IMR-90 (cell line): ENCODE measurements at regions of chr1 and their contacts with region 1.

Region 1: DNA sequence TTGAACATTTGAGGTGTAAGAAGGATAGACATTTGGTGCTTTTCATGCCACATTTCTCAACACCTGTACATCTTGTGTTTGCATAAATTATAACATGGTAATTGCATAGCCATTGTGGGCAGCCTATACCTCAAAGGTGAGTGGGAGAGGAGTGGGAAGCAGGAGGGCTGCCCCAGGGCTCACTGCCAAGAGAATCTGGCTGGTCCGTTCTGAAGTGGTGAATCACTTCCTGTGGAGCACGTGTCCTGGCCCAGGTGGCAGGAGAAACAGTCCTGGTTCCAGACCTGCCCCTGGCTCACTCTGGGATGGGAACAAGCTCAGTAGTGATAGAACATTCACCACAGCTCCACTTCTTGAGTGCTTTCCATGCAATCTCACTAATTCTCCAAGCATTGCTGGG is 11.6 kb upstream of the OLFML2B start:
- DNase-seq: no peak
- ATAC-seq: no peak
- H3K4me3 ChIP-seq: no peak overlapping the region
- H3K27ac ChIP-seq: no peak overlapping the region
- H3K4me1 ChIP-seq: no peaks in the 10 kb centered on the region
- H3K27me3 ChIP-seq: peaks cover 23% of the 10 kb centered on the region
- CTCF ChIP-seq: no peak
- POLR2A ChIP-seq: no peak
- RAD21 ChIP-seq: no peak

Region 2: DNA sequence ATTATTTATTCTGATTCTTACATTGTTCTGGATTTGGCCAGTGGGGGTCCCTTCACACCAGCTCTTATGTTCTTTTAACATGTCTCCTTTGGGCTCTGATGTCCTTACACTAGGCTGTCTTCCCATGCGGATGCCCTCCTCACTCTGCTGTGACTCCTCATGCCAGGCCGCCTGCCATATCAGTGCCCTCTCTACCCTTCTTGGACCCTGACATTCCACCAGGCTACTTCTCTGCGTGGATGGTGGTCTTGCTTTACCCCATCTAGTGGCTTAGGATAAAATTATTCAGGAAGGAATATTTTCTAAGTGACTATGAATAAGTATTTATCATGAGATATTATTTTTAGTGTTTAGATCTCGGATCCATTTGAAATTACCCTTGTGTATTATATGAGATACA is 247.9 kb before region 1 on chr1:
- CTCF ChIA-PET with region 1: interaction called, 76 read pairs
- POLR2A ChIA-PET with region 1: interaction called, 7 read pairs
- dilution Hi-C with region 1: no loop called
- in situ Hi-C with region 1: loop called (anchors 5 kb)
- intact Hi-C with region 1: loop called (anchors 1 kb)
- DNase-seq: no peak
- ATAC-seq: no peak
- H3K4me3 ChIP-seq: no peak overlapping the region
- H3K27ac ChIP-seq: no peak overlapping the region
- H3K4me1 ChIP-seq: peaks cover 4% of the 10 kb centered on the region
- H3K27me3 ChIP-seq: no peaks in the 10 kb centered on the region
- CTCF ChIP-seq: 0 out of 2 replicates have a peak, but pooled peaks have one; percentile 10
- POLR2A ChIP-seq: no peak
- RAD21 ChIP-seq: no peak

Region 3: GRCh38 chr1:161946071-161946987 is 88.9 kb before region 1 on chr1:
- CTCF ChIA-PET with region 1: no interaction called
- POLR2A ChIA-PET with region 1: no interaction called
- dilution Hi-C with region 1: no loop called
- in situ Hi-C with region 1: no loop called
- intact Hi-C with region 1: no loop called
- DNase-seq: peak; percentile 80
- ATAC-seq: peak; percentile 56
- H3K4me3 ChIP-seq: no peak overlapping the region
- H3K27ac ChIP-seq: no peak overlapping the region
- H3K4me1 ChIP-seq: no peaks in the 10 kb centered on the region
- H3K27me3 ChIP-seq: no peaks in the 10 kb centered on the region
- CTCF ChIP-seq: no peak
- POLR2A ChIP-seq: no peak
- RAD21 ChIP-seq: no peak